Astrocyte of the cerebellum (primary cell): ENCODE measurements at regions of chr1 and their contacts with region 1.

Region 1: GRCh38 chr1:158644449-158644848 is 39.4 kb downstream of the OR10Z1 start:
- DNase-seq: no peak
- H3K4me3 ChIP-seq: no peak overlapping the region
- CTCF ChIP-seq: no peak

Region 2: DNA sequence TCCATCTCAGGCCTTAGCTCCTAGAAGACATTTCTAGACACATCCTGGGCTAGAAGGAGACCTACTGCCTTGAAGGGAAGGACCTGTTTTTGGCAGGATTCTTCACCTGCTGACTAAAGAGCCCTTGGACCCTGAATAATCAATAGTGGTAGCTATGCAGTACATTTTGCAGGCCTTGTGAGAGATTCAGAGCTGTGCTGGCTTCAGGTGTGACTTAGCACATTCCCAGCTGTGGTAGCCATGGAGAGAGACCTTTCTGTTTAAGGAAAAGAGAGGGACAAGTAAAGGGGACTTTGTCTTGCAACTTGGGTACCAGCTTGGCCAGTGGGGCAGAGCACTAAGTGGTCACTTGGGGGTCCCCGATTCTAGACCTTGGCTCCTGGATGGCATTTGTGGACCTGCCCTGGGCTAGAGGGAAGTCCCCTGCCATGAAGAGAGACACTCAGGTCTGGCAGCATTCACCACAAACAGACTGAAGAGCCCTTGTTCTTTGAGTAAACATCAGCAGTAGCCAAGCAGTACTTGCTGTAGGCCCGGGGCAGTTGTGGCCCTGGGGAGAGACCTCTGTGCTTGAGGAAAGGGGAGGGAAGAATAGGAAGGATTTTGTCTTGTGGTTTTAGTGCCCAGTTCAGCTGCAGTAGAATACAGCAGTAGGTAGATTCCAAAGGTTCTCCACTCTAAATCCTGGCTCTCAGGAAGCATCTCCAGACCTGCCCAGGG is 416.4 kb before region 1 on chr1:
- in situ Hi-C with region 1: no loop called
- DNase-seq: no peak
- H3K4me3 ChIP-seq: no peak overlapping the region
- CTCF ChIP-seq: no peak

Region 3: DNA sequence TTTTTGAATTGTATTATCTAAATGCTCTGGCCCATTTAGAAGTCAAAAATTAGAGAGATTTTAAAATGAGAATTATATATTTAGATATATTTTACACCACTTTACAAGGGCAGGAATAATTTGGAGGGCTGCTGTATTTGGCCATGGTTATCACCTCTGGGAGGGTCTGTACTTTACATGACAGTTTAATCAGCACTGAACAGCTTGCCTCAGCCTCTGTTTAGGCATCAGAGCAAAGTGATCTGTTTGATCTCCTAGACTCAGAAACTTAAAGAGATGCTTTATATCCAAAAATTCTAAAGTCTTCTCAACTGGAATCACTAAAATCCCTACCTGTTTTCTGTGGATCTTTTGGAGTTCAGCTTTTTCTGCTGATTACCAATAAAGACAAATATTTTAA is 47.5 kb after region 1 on chr1:
- in situ Hi-C with region 1: loop called (anchors 5 kb)
- DNase-seq: no peak
- H3K4me3 ChIP-seq: no peak overlapping the region
- CTCF ChIP-seq: no peak